BJ (cell line): ENCODE measurements at regions of chr12 and their contacts with region 1.

Region 1: DNA sequence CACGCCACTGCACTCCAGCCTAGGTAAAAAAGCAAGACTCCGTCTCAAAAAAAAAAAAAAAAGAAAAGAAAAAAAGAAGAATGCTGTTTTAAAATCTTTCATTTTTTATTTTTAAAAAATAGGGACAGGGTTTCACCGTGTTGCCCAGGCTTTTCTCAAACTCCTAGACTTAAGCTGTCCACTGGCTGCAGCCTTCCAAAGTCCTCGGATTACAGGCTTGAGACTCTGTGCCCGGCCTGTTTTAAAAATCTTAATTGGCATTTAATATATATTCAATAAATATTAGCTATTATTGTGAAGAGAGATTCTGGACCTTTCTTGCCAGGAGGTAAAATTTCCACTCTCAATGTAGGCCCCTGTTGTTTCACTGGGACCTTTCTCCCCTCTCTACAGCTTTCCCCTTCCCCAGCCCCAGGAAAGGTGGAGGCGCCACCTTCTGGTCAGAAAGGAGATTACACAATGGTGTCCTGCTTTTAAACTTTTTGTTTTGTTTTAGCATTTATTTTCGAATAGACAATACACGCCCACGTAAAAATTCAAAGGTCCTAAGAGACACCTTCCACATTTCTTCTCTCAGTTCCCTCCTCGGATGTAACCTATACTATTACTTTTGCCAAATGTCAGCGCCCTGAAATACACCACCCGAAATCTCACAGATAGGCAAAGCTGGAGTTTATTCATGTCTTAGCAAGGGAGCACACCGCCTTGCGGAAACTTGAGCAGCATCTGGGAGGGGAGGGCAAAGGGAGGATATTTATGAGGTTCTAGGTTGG is 23.8 kb upstream of the PHC1 start:
- DNase-seq: no peak
- H3K4me3 ChIP-seq: peak overlapping the region; percentile 47
- H3K27me3 ChIP-seq: no peaks in the 10 kb centered on the region
- CTCF ChIP-seq: peak; percentile 86

Region 2: DNA sequence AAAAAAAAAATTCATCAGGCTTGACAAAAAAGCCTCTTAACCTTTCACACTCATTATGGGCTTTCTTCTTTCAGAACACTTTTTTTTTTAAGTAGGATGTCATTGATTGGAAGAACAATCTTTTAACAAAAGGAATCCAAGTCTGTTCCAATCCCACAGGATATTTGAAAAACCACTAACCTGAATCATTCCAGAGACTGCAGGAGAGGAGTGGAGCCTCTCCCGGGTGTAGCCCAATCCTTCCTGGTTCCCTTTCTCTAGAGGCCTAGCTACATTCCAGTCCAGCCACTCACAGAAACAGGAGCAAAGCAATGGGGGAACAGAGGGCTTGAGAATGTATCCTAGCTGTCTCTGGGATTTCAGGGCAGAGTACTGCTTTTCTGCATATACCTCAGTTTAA is 232.2 kb before region 1 on chr12:
- CTCF ChIA-PET with region 1: interaction called, 40 read pairs
- POLR2A ChIA-PET with region 1: no interaction called
- DNase-seq: peak; percentile 57
- H3K4me3 ChIP-seq: no peak overlapping the region
- H3K27me3 ChIP-seq: no peaks in the 10 kb centered on the region
- CTCF ChIP-seq: no peak

Region 3: DNA sequence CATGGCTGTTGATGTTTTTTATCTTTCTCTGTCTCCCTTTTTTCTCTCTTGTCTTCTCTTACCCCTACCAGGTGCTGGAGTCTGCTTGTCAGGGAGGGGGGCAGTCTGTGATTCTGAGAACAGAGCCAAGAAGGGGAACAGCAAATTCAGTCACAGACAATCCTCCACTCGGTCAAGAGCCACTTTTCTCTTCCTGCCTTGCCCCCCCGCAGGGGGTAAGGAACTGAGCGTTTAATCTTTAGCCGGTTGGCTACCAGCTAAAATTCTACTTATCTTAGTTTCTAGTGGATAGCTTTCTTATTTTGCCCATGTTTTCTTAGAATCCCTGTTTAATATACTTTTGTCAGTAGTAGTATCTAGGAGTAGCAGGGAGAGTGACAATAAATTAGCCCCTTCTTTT is 190.8 kb before region 1 on chr12:
- CTCF ChIA-PET with region 1: interaction called, 11 read pairs
- POLR2A ChIA-PET with region 1: no interaction called
- DNase-seq: no peak
- H3K4me3 ChIP-seq: no peak overlapping the region
- H3K27me3 ChIP-seq: no peaks in the 10 kb centered on the region
- CTCF ChIP-seq: no peak

Region 4: DNA sequence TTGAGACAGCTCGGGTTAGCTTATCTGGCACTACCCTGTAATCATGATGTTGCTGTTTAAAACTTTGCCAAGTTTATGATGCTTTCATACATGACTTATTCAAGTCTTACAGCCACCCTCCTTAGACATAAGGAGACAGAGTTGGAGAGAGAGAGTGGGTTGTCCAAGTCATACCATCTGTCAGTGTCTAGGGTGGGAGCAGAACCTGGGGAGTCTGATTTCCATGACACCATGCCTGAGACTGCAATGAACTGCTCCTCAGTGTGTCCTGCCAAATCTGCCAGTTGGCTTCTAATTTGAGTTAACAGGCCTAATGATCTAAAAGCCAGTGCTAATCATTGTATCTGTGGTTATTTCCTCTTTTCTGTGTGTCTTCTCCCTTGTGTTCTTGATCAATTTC is 19.9 kb before region 1 on chr12:
- CTCF ChIA-PET with region 1: interaction called, 20 read pairs
- POLR2A ChIA-PET with region 1: no interaction called
- DNase-seq: no peak
- H3K4me3 ChIP-seq: no peak overlapping the region
- H3K27me3 ChIP-seq: no peaks in the 10 kb centered on the region
- CTCF ChIP-seq: no peak

Region 5: DNA sequence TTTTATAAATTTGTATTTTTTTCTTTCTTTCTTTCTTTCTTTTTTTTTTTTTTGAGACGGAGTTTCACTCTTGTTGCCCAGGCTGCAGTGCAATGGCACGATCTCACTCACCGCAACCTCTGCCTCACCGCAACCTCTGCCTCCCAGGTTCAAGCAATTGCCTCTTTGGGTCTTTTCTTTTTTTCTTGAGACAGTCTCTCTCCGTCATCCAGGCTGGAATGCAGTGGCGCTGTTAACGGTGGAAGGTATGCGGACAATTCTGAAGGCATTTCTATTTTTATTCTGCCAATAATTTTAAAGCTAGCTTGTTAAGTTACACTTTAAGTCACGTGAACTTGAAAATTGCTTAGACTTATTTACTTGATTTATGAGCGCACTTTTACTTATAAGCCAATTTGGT is 15.0 kb after region 1 on chr12:
- CTCF ChIA-PET with region 1: interaction called, 12 read pairs
- POLR2A ChIA-PET with region 1: no interaction called
- DNase-seq: no peak
- H3K4me3 ChIP-seq: no peak overlapping the region
- H3K27me3 ChIP-seq: no peaks in the 10 kb centered on the region
- CTCF ChIP-seq: no peak